Activated CD4-positive, alpha-beta memory T cell treated with anti-CD3 and anti-CD28 coated beads, Interleukin-2, amount 10 ng/mL, durations not matched to agents 7 days and 5 days (primary cell): ENCODE measurements at regions of chr20 and their contacts with region 1.

Region 1: DNA sequence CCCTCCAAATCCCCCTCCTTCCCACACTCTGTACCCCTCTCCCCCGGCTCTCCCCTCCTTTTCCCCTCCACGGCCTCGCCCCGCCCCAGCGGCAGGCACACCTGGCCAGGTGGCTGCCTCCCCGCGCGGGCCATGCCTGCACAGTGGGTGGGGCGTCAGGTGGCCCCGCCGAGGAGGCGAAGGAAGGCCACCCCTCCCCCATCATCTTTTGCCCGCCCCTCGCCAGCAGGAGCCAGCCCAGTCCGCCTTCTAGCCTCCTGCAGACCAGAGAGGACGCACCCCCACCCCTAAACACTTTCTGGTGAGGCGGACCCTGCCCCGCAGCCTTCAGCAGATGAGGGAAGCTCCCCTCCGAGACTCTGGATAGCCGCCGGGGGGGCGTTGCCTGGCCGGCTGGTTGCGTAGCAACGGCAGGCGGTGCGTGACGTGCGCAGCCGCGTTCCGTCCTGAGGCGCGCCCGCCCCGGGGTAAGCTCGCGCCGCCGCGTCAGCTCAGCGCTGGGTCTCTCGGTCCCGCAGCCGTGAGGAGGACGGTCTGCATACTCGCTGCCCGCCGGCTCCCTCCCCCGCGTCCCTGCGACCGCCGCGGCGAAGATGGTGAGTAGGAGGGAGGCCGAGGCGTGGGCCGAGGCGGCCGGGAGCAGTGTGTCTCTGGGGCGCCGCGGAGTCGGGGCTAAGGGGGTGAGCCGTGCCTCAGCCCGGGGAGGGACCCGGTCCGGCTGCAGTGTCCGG is at the start of gene DSTN:
- DNase-seq: peak; percentile 90
- H3K4me3 Mint-ChIP-seq: peak within 1 kb of the TSS; percentile 85
- H3K27ac Mint-ChIP-seq: peak within 1 kb of the TSS; percentile 83
- H3K4me1 Mint-ChIP-seq: peaks cover 33% of the 10 kb centered on the region
- H3K27me3 Mint-ChIP-seq: peaks cover 16% of the 10 kb centered on the region
- total RNA-seq, gene DSTN: 104 to 109 TPM

Region 2: GRCh38 chr20:17530716-17531664 is 38.8 kb before region 1 on chr20 and contains the start of gene BFSP1:
- CTCF ChIA-PET with region 1: interaction called, 20 read pairs
- POLR2A ChIA-PET with region 1: interaction called, 13 read pairs
- DNase-seq: peak; percentile 75
- H3K4me3 Mint-ChIP-seq: peak within 1 kb of the TSS; percentile 95
- H3K27ac Mint-ChIP-seq: peak within 1 kb of the TSS; percentile 94
- H3K4me1 Mint-ChIP-seq: peaks cover 33% of the 10 kb centered on the region
- H3K27me3 Mint-ChIP-seq: no peaks in the 10 kb centered on the region
- total RNA-seq, gene BFSP1: 2.7 to 3.2 TPM

Region 3: DNA sequence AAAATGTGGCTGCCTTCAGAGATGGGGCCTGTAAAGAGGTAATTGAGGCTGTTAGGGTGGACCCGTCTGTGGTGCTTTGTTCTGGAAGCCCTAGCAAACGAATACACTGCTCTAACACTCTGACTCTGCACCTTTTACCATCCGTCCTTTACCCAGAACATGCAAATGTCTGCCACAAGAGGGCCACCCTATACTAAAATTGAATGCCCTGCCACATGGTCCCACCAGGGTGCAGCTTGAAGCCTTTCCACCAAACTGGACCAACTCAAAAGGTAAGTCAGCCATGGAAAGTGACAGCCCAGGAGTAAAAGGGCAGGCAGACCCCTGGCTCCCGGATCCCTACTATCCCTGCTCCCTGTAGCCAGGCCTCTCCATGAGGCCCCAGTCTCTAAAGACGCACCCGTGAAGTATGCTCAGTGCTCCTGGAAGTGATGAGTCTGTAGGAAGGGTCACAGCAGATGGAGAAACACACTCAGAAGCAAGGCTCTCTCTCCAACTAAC is 32.8 kb before region 1 on chr20:
- CTCF ChIA-PET with region 1: interaction called, 20 read pairs
- POLR2A ChIA-PET with region 1: interaction called, 8 read pairs
- DNase-seq: peak; percentile 77
- H3K4me3 Mint-ChIP-seq: no peak overlapping the region
- H3K27ac Mint-ChIP-seq: no peak overlapping the region
- H3K4me1 Mint-ChIP-seq: peaks cover 45% of the 10 kb centered on the region
- H3K27me3 Mint-ChIP-seq: peaks cover 25% of the 10 kb centered on the region

Region 4: GRCh38 chr20:17604852-17605660 is 35.3 kb after region 1 on chr20:
- CTCF ChIA-PET with region 1: interaction called, 24 read pairs
- POLR2A ChIA-PET with region 1: interaction called, 47 read pairs
- DNase-seq: no peak
- H3K4me3 Mint-ChIP-seq: no peak overlapping the region
- H3K27ac Mint-ChIP-seq: peak overlapping the region; percentile 24
- H3K4me1 Mint-ChIP-seq: peaks cover 29% of the 10 kb centered on the region
- H3K27me3 Mint-ChIP-seq: no peaks in the 10 kb centered on the region

Region 5: DNA sequence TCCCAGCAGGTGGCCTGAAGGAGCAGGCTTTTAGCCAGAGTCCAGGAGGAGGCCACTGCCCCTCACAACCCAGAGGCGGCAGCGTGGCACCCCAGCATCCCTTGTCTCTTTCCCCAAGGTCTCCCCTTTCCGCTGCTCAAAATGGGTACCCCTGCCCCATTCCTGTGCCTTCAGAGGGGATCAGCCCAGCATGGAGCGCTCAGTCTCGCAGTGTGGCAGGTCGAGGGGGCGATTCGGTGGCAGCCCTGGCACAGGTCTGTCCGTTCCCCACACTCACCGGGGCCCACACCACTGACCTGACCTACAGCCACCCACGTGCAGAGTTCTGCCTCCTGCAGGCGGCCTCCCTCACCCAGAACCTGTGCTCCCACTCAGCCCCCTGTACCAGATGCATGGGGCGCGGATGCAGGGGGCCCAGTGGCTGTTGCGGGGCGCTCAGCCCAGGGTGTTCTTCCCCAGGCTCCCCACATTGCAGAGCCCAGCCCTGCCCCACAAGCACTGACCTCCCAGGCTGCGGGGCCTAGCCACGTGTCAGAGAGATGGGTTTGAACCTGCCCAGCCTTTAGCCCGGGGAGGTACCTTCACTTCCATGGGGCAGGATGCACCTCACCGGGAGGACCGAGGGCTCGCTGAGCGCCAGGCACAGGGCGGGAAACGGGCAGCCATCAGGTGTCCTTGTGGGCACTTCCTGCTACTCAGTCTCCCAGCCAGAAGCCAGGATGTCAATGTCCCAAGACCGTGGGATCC is 41.9 kb after region 1 on chr20:
- CTCF ChIA-PET with region 1: interaction called, 24 read pairs
- POLR2A ChIA-PET with region 1: interaction called, 47 read pairs
- DNase-seq: peak; percentile 35
- H3K4me3 Mint-ChIP-seq: peak overlapping the region; percentile 48
- H3K27ac Mint-ChIP-seq: peak overlapping the region; percentile 95
- H3K4me1 Mint-ChIP-seq: peaks cover 50% of the 10 kb centered on the region
- H3K27me3 Mint-ChIP-seq: no peaks in the 10 kb centered on the region

Region 6: DNA sequence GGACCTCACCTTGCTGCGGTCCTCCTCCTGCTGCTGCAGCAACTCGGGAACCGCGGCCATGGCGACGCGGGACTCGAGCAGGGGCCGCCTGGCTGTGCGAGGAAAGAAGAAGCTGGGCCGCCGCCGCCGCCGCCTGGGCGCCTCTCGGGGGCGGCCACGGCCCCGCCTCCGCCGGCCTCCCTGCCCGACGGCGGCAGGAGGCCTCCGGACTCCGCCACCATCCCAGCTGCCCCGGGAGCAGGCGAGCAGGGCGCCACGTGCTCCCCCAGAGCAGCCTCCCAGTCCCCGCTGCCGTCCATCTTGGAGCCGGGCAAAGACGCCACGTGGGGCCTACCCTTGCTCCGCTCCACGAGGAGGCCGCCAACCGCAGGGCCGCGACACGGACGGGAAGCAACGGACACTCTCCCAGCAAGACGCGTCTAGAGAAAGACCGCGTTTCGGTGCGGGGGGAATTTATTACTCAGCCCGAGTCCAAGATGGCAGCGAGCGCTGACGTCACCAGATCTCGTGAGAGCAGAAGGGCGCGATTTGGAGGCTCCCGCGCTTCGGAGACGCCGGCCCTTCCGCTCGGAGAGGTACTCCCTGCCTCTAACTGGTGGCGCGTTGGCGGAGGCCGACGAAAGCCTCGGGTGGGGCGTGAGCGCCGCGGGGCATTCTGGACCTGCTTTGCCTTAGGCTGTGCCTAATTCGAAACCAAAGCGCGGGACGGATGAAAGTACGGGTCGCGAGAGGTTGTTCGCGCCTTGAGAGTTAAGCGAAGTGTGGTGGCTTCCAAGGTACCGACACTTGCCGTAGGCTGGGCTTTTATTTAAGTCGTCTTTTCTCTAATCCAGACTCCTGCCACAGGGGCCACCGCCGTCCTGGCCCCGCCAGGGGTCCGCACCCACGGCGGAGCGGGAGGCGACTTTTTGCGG is 398.8 kb after region 1 on chr20 and contains the starts of genes MGME1 and SNX5:
- CTCF ChIA-PET with region 1: no interaction called
- POLR2A ChIA-PET with region 1: interaction called, 23 read pairs
- DNase-seq: peak; percentile 100
- H3K4me3 Mint-ChIP-seq: peak within 1 kb of the TSS; percentile 97
- H3K27ac Mint-ChIP-seq: peak within 1 kb of the TSS; percentile 98
- H3K4me1 Mint-ChIP-seq: peaks cover 34% of the 10 kb centered on the region
- H3K27me3 Mint-ChIP-seq: no peaks in the 10 kb centered on the region
- total RNA-seq, gene MGME1: 53.9 to 56.7 TPM
- total RNA-seq, gene SNX5: 236 to 250 TPM